SK-N-SH (cell line): ENCODE measurements at regions of chr6 and their contacts with region 1.

Region 1: GRCh38 chr6:27809939-27810767 is 102.0 kb downstream of the OR2B2 start:
- DNase-seq: peak; percentile 74
- H3K4me3 ChIP-seq: peak overlapping the region; percentile 69 to 83
- H3K27ac ChIP-seq: peak overlapping the region; percentile 80 to 99
- H3K4me1 ChIP-seq: peaks cover 3 to 12% of the 10 kb centered on the region in 2 experiments; a peak in 3 of 4 replicates
- H3K27me3 ChIP-seq: no peaks in the 10 kb centered on the region
- CTCF ChIP-seq: peak; percentile 31
- EP300 ChIP-seq: peak in 1 of 2 experiments; percentile 61; a peak in 1 of 4 replicates
- RAD21 ChIP-seq: no peak

Region 2: GRCh38 chr6:27132532-27133280 is 677.4 kb before region 1 on chr6:
- CTCF ChIA-PET with region 1: no interaction called
- POLR2A ChIA-PET with region 1: interaction called, 17 read pairs
- DNase-seq: peak; percentile 93
- H3K4me3 ChIP-seq: peak overlapping the region; percentile 72 to 73
- H3K27ac ChIP-seq: peak overlapping the region; percentile 91 to 97
- H3K4me1 ChIP-seq: peaks cover 4 to 6% of the 10 kb centered on the region in 2 experiments; a peak in 3 of 4 replicates
- H3K27me3 ChIP-seq: no peaks in the 10 kb centered on the region
- CTCF ChIP-seq: no peak
- EP300 ChIP-seq: peak in 1 of 2 experiments; percentile 43; a peak in 1 of 4 replicates
- RAD21 ChIP-seq: no peak

Region 3: DNA sequence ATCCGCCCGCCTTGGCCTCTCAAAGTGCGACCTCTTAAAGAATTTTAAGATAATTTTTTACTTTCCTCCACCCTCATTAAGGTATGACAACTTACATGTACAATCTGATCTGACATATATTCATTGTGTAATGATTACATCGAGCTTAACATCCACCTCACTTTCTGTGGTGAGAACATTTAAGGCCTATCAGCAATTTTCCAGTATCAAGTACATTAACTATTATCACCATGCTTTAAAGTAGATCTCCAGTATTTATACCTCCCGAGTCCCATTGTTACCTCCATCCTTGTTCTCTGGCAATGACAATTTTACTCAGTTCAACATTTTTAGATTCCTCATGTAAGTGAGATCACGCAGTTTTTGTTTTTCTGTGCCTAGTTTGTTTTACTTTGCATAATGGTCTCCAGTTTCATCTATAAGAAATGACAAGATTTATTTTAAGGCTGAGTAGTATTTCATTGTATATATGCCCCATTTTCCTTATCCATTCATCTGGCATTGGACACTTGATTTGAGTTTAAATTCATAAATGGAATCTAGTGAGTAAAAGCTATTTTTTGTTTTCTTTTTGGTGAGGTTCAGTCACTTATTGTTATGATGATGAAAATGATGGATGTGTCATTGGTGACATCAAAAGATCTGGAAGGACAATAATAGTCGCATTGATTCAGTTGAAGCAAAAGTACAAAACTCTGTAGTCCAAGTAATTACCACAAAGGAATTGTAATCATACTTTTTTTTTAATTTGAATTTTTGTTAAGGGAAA is 15.1 kb after region 1 on chr6:
- CTCF ChIA-PET with region 1: interaction called, 6 read pairs
- POLR2A ChIA-PET with region 1: interaction called, 35 read pairs
- DNase-seq: no peak
- H3K4me3 ChIP-seq: peak overlapping the region; percentile 86 to 98
- H3K27ac ChIP-seq: peak overlapping the region; percentile 89 to 93
- H3K4me1 ChIP-seq: no peaks in the 10 kb centered on the region; a peak in 3 of 4 replicates
- H3K27me3 ChIP-seq: no peaks in the 10 kb centered on the region
- CTCF ChIP-seq: no peak
- EP300 ChIP-seq: no peak
- RAD21 ChIP-seq: no peak

Region 4: DNA sequence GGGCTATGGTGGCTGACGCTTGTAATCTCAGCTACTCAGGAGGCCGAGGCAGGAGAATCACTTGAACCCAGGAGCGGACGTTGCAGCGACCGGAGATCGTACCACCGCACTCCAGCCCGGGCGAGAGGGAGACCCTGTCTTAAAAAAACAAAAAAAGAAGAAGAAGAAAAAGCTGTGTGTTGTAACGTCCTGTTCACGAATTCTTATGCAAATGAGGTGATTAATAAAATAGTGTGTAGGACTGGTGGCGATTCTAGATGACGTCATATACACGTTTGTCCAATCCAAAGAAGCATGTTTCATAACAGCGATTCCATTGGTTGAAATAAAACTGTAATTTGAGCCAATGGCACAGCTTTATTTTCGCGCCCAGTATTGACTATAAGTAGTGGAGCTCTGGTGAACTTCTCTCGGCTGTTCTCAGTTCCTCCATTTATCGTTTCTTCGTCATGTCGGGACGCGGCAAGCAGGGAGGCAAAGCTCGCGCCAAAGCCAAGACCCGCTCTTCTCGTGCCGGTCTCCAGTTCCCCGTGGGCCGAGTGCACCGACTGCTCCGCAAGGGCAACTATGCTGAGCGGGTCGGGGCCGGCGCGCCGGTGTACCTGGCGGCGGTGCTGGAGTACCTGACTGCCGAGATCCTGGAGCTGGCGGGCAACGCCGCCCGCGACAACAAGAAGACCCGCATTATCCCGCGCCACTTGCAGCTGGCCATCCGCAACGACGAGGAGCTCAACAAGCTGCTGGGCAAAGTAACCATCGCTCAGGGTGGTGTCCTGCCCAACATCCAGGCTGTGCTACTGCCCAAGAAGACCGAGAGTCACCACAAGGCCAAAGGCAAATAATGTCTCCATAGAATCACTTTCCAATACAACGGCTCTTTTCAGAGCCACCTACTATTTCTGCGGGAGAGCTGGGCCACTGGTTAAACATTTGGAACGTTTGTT is 55.0 kb after region 1 on chr6:
- CTCF ChIA-PET with region 1: no interaction called
- POLR2A ChIA-PET with region 1: interaction called, 23 read pairs
- DNase-seq: peak; percentile 85
- H3K4me3 ChIP-seq: peak overlapping the region; percentile 47 to 80
- H3K27ac ChIP-seq: peak overlapping the region; percentile 80 to 97
- H3K4me1 ChIP-seq: peaks cover 0 to 20% of the 10 kb centered on the region in 2 experiments; a peak in 2 of 4 replicates
- H3K27me3 ChIP-seq: no peaks in the 10 kb centered on the region
- CTCF ChIP-seq: no peak
- EP300 ChIP-seq: no peak; a peak in 1 of 4 replicates
- RAD21 ChIP-seq: no peak